ENCODE measurements at regions of chr1 and their contacts with region 1.

Region 1: GRCh38 chr1:223133824-223134435 is 9.1 kb downstream of the TLR5 start:
- DNase-seq: peak; percentile 82
- ATAC-seq: peak; percentile 91
- H3K4me3 Mint-ChIP-seq: peak overlapping the region; percentile 23
- H3K27ac Mint-ChIP-seq: no peak overlapping the region
- H3K4me1 Mint-ChIP-seq: peaks cover 13% of the 10 kb centered on the region
- H3K27me3 Mint-ChIP-seq: peaks cover 25% of the 10 kb centered on the region

Region 2: GRCh38 chr1:223149046-223149445 is 15.1 kb after region 1 on chr1:
- CTCF ChIA-PET with region 1: interaction called, 78 read pairs
- POLR2A ChIA-PET with region 1: interaction called, 3 read pairs
- DNase-seq: no peak
- ATAC-seq: no peak
- H3K4me3 Mint-ChIP-seq: no peak overlapping the region
- H3K27ac Mint-ChIP-seq: no peak overlapping the region
- H3K4me1 Mint-ChIP-seq: peaks cover 12% of the 10 kb centered on the region
- H3K27me3 Mint-ChIP-seq: peaks cover 12% of the 10 kb centered on the region

Region 3: GRCh38 chr1:223189903-223190724 is 56.2 kb after region 1 on chr1:
- CTCF ChIA-PET with region 1: interaction called, 10 read pairs
- POLR2A ChIA-PET with region 1: no interaction called
- DNase-seq: peak; percentile 68
- ATAC-seq: peak; percentile 78
- H3K4me3 Mint-ChIP-seq: peak overlapping the region; percentile 16
- H3K27ac Mint-ChIP-seq: peak overlapping the region; percentile 81
- H3K4me1 Mint-ChIP-seq: peaks cover 32% of the 10 kb centered on the region
- H3K27me3 Mint-ChIP-seq: peaks cover 5% of the 10 kb centered on the region

Region 4: GRCh38 chr1:223244366-223245103 is 110.6 kb after region 1 on chr1:
- CTCF ChIA-PET with region 1: interaction called, 126 read pairs
- POLR2A ChIA-PET with region 1: interaction called, 6 read pairs
- DNase-seq: no peak
- ATAC-seq: peak; percentile 53
- H3K4me3 Mint-ChIP-seq: no peak overlapping the region
- H3K27ac Mint-ChIP-seq: peak overlapping the region; percentile 29
- H3K4me1 Mint-ChIP-seq: peaks cover 48% of the 10 kb centered on the region
- H3K27me3 Mint-ChIP-seq: no peaks in the 10 kb centered on the region

Region 5: GRCh38 chr1:223273511-223273910 is 139.6 kb after region 1 on chr1:
- CTCF ChIA-PET with region 1: interaction called, 12 read pairs
- POLR2A ChIA-PET with region 1: no interaction called
- DNase-seq: no peak
- ATAC-seq: no peak
- H3K4me3 Mint-ChIP-seq: no peak overlapping the region
- H3K27ac Mint-ChIP-seq: no peak overlapping the region
- H3K4me1 Mint-ChIP-seq: no peaks in the 10 kb centered on the region
- H3K27me3 Mint-ChIP-seq: no peaks in the 10 kb centered on the region

Region 6: DNA sequence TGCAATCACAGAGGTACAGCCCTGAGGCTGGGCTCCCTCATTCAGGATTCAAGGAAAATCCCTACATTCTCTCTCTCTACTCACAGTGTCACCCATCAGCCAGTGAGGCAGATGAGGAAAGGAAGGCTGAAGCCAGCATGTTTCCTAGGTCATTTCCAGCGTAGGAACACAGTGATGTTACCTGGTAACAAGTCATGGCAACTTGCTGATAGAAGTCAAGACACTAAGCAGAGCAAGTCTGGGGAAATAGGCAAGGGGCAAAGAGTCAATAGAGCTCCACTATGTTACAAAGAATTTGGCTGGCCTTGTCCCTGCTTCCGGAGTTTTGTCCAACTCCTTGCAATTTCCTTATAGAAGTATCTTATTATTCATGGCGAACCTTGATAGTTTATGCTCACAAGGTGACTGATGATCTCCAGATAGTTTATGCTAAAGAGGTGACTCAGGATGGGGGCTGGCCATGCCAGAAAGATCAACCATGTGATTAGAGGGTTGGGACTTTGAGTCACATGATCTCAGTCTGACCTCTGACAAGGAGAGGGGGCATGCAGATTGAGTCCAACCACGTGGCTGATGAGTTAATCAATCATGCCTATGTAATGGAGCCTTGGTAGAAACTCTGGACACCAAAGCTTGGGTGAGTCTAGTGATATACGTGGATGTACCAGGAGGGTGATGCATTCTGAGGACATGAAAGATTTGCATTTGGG is 178.9 kb after region 1 on chr1:
- CTCF ChIA-PET with region 1: no interaction called
- POLR2A ChIA-PET with region 1: no interaction called
- DNase-seq: no peak
- ATAC-seq: no peak
- H3K4me3 Mint-ChIP-seq: no peak overlapping the region
- H3K27ac Mint-ChIP-seq: no peak overlapping the region
- H3K4me1 Mint-ChIP-seq: no peaks in the 10 kb centered on the region
- H3K27me3 Mint-ChIP-seq: no peaks in the 10 kb centered on the region

Region 7: GRCh38 chr1:223363856-223364684 is 230.1 kb after region 1 on chr1 and contains the start of gene SUSD4:
- CTCF ChIA-PET with region 1: interaction called, 13 read pairs
- POLR2A ChIA-PET with region 1: no interaction called
- DNase-seq: peak; percentile 69
- ATAC-seq: peak; percentile 86
- H3K4me3 Mint-ChIP-seq: peak within 1 kb of the TSS; percentile 74
- H3K27ac Mint-ChIP-seq: no peak within 1 kb of the TSS
- H3K4me1 Mint-ChIP-seq: peaks cover 10% of the 10 kb centered on the region
- H3K27me3 Mint-ChIP-seq: peaks cover 54% of the 10 kb centered on the region
- total RNA-seq, gene SUSD4: 0.18 to 0.23 TPM

Measured in activated CD8-positive, alpha-beta T cell treated with anti-CD3 and anti-CD28 coated beads, Interleukin-2, amount 10 ng/mL, durations not matched to agents 7 days and 5 days (primary cell).